Activated CD4-positive, alpha-beta T cell treated with anti-CD3 and anti-CD28 coated beads for 36 hours (primary cell): ENCODE measurements at regions of chr1 and their contacts with region 1.

Region 1: DNA sequence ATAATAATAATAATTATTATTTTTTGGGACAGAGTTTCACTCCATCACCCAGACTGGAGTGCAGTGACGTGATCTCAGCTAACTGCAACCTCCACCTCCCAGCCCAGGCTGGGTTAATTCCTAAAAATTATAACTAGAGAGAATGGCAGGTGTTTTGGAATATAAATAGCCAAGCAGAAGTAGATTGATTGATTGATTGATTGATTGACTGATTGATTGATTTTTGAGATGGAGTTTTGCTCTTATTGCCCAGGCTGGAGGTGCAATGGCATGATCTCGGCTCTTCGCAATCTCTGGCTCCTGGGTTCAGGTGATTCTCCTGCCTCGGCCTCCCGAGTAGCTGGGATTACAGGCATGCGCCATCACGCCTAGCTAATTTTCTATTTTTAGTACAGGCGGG is 14.4 kb upstream of the MOV10 start:
- DNase-seq: no peak
- ATAC-seq: no peak
- H3K4me3 Mint-ChIP-seq: no peak overlapping the region
- H3K27ac Mint-ChIP-seq: no peak overlapping the region
- H3K4me1 Mint-ChIP-seq: no peaks in the 10 kb centered on the region
- H3K27me3 Mint-ChIP-seq: no peaks in the 10 kb centered on the region

Region 2: GRCh38 chr1:112674439-112674985 is 14.4 kb after region 1 on chr1 and contains the start of gene MOV10:
- CTCF ChIA-PET with region 1: interaction called, 19 read pairs
- POLR2A ChIA-PET with region 1: interaction called, 4 read pairs
- intact Hi-C with region 1: no loop called
- DNase-seq: peak; percentile 77
- ATAC-seq: peak; percentile 83
- H3K4me3 Mint-ChIP-seq: peak within 1 kb of the TSS; percentile 88
- H3K27ac Mint-ChIP-seq: peak within 1 kb of the TSS; percentile 92
- H3K4me1 Mint-ChIP-seq: peaks cover 43% of the 10 kb centered on the region
- H3K27me3 Mint-ChIP-seq: no peaks in the 10 kb centered on the region
- total RNA-seq, gene MOV10: 80.3 to 87.5 TPM

Region 3: GRCh38 chr1:113375878-113376277 is 715.8 kb after region 1 on chr1:
- CTCF ChIA-PET with region 1: no interaction called
- POLR2A ChIA-PET with region 1: no interaction called
- intact Hi-C with region 1: no loop called
- DNase-seq: no peak
- ATAC-seq: no peak
- H3K4me3 Mint-ChIP-seq: no peak overlapping the region
- H3K27ac Mint-ChIP-seq: no peak overlapping the region
- H3K4me1 Mint-ChIP-seq: no peaks in the 10 kb centered on the region
- H3K27me3 Mint-ChIP-seq: peaks cover 8% of the 10 kb centered on the region